Ascending aorta (tissue), 2 donors: ENCODE measurements at regions of chr5 and their contacts with region 1.

Region 1: DNA sequence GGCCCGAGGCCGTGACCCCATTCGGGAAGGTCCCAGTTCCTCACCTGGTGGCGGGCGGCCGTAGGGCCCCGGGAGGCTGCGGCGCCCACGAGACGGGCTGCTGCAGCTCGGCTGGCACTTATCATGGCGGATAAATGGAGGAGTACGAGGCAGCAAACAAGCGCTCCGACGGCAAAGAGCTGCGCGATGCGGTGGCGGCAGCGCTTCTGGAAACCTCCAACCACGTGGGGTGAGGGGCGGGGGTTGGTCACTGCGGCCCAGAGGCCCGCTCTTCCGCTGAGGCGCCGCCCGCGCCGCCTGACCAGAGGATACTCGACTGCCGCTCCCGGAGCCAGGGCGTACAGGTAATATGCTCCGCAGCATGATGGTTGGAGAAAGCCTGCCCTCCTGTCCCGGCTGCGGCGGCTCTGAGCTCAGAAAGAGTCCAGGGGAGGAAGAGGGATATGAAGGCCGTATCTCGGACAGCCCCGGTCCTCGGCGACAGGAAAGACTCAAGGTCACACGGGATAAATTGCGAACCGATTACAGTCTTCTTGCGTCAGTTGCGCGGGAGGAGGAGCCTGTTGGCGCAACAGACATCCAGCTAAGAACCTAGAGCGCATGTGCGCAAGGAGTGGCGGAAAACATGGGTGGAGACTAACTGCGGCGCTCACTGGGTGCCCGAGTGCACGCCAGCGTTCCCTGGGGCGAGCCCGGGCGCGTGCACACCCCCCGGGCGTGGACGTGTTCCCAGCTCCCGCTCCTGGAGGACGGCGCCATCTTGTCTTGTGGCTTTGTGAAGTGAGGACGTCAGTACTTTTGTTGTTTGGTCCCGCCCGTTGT is at the start of gene HSPA9:
- DNase-seq: peak; percentile 96 to 100
- H3K4me3 ChIP-seq: peak within 1 kb of the TSS; percentile 89 to 90
- H3K27ac ChIP-seq: peak within 1 kb of the TSS; percentile 97 to 99
- H3K4me1 ChIP-seq: peaks cover 5 to 15% of the 10 kb centered on the region in 2 donors
- H3K27me3 ChIP-seq: no peaks in the 10 kb centered on the region
- CTCF ChIP-seq: peak in 1 of 3 experiments; percentile 11
- total RNA-seq, gene HSPA9: 75.5 TPM

Region 2: DNA sequence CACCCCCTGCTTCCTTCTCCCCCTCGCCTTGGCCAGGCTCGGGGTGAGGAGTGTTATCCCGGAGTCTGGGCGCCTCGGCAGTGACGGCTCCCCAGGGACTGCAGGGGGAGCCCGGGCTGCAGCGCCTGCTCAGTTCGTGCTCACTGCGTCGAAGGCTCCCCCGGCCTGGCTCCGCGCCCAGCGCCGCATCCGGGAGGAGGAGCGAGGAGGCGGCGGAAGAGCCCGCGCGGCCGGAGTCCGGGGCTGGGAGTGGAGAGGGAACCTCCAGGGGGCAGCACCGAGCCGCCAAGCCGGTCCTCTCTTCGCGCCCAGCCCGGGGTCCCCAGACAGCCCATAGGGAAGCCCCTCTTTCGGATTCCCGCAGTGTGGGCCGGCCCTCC is 111.4 kb before region 1 on chr5:
- intact Hi-C with region 1: loop called (anchors 10 kb)
- DNase-seq: peak; percentile 71 to 96
- H3K4me3 ChIP-seq: peak overlapping the region; percentile 65 to 91
- H3K27ac ChIP-seq: peak overlapping the region; percentile 98 to 99
- H3K4me1 ChIP-seq: peaks cover 9 to 27% of the 10 kb centered on the region in 2 donors
- H3K27me3 ChIP-seq: no peaks in the 10 kb centered on the region
- CTCF ChIP-seq: peak; percentile 90 to 96 (median 95)

Region 3: DNA sequence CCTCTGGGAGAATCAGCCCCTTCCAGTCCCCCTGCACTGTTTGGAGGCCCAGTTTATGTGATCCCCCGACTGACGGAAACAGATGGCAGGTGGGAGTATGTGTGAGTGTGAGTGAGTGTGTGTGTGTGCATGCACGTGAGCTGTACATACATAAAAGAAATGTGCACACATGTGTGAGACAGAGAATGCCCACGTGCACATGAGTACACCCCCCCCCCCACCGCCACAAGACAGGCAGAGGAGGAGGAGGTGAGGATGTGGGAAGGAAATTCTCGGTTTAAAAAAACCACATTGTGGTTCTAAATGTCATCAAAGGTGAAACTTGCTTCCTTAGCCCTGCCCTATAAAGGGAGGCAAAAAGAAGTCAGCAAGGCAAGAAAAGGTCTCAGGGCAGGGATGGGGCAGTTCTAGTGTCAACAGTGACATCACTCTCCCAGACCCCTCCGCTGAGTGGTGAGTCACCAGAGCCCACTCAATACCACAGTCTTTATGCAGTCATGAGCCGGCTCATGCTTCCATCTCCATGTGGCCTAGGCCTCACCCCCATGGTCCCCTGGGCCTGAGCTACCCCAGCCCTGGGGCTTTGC is 79.0 kb after region 1 on chr5:
- intact Hi-C with region 1: no loop called
- DNase-seq: no peak
- H3K4me3 ChIP-seq: no peak overlapping the region
- H3K27ac ChIP-seq: no peak overlapping the region
- H3K4me1 ChIP-seq: no peaks in the 10 kb centered on the region
- H3K27me3 ChIP-seq: no peaks in the 10 kb centered on the region
- CTCF ChIP-seq: no peak

Region 4: GRCh38 chr5:138752951-138753793 is 177.8 kb after region 1 on chr5 and contains the start of gene CTNNA1:
- intact Hi-C with region 1: loop called (anchors 1 kb)
- DNase-seq: peak; percentile 13 to 86
- H3K4me3 ChIP-seq: peak within 1 kb of the TSS; percentile 93 to 98
- H3K27ac ChIP-seq: peak within 1 kb of the TSS; percentile 98 to 100
- H3K4me1 ChIP-seq: peaks cover 6 to 24% of the 10 kb centered on the region in 2 donors
- H3K27me3 ChIP-seq: no peaks in the 10 kb centered on the region
- CTCF ChIP-seq: no peak
- total RNA-seq, gene CTNNA1: 310 TPM

Region 5: DNA sequence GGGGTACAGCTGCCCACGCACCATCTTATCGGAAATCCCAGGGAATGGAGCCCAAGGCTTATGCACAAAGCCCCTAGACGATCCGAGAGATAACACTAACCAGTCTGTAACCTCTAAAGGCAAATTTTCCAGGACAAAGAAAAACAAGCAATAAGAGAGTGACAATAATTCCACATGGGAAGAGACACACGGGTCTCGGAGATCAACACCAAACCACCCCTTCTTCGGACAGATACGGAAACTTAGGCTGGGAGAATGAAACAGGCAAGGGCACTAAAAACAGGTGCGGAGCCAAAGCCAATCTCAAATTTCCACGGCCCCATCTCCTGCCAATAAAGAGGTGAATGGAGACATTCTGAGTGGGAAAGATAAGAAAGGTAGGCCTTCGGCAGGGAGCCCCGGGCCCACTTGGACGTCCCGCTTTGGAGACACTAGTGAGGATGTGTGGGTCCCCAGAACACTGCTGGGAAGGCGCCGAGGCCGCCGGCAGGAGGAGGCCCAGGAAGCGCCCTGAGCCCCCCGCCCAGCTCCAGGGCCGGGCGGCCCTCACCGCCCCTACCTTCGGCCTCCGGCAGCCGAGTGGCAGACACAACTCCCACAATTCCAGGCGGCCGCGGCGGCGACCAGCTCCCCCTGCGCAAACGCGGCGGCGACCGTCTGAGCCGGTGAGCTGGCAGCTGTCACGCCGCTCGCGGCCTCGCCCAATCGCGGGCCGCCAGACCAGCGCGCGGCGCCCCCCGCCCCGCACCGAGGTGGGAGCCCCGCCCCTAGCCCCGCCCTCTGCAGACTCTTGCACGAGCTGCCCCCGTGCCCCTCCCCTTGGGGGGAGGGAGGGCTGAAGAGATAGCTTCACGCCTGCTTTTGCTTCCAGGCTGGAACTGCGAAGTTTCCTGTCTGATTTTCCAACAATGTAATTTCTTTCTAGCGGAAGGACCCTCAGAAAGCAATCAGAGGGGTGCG is 622.6 kb after region 1 on chr5 and contains the start of gene SIL1:
- intact Hi-C with region 1: loop called (anchors 5 kb)
- DNase-seq: peak; percentile 84 to 98
- H3K4me3 ChIP-seq: peak within 1 kb of the TSS; percentile 63 to 79
- H3K27ac ChIP-seq: peak within 1 kb of the TSS; percentile 77 to 89
- H3K4me1 ChIP-seq: peaks cover 0 to 9% of the 10 kb centered on the region in 2 donors
- H3K27me3 ChIP-seq: no peaks in the 10 kb centered on the region
- CTCF ChIP-seq: no peak
- total RNA-seq, gene SIL1: 53.4 TPM

Region 6: DNA sequence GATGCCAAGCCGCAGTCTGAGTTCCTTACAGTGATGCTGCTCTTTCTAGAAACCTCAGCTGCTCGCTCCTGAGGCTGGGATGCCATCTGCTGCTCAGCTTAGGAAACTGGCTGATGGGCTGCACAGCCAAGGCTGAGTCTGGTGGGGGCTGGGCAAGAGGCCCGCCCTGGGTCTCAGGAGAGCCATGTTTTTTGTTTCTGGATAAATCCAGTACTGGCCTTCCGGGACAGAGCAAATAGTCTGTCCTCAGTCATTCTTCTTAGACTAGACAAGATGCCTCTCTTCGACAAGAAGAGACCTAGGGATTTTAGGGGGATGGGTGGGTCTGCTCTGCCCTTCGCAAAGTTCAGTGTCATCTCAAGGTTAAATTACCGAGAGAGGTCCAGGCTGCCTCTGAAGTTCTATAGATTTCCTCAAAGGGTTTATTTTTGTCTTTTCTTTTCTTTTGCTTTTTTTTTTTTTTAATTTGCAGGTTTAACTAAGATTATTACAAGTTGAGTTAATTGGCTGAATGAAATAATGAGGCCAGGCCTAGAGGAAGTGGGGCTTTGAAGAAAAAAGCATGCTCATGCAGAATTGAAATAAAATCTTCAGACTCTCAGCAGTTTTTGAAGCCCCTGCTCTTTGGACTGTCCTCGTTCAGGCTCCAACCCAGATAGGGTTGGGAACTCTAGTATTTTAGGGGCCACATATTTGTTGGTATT is 687.5 kb after region 1 on chr5:
- intact Hi-C with region 1: loop called (anchors 1 kb)
- DNase-seq: peak; percentile 56 to 94
- H3K4me3 ChIP-seq: no peak overlapping the region
- H3K27ac ChIP-seq: peak overlapping the region; percentile 28 to 49
- H3K4me1 ChIP-seq: peaks cover 0 to 8% of the 10 kb centered on the region in 2 donors
- H3K27me3 ChIP-seq: no peaks in the 10 kb centered on the region
- CTCF ChIP-seq: peak; percentile 90 to 96 (median 95)

Region 7: DNA sequence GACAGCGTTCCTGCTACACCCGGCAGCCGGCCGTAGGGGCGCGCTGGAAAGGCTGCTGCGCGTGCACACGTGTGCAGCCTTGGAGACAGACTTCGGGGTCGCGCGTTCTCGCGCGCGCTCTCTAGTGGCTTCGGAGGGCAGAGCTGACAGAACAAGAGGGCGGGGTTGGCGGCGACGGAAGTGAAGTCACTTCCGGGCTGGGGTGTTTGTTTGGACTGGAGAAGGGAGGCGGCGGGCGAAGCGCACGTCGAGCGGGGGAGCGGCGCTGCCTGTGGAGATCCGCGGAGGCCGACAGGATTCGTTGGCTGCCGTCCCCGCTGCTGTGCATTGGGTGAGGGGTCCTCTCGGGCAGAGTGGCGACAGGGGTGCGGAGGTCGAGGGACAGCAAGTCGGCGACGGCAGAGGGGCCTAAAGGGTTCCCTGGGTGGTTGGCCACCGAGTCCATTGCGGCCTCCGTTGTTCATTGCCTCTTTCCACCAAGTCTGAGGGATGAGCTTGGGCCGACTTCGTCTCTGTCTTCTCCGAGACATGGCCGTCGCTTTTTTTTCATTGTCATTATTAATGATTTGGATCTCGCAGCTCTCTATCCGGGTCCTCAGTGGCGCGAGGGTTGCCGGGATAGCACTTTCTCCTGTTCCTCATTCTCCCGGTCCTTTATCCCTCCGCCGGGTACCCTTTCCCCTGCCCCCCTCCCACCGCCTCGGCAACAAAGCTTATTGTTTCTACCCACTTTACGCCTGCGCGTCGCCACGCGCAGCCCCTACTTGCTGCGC is 766.4 kb after region 1 on chr5 and contains the start of gene PAIP2:
- intact Hi-C with region 1: loop called (anchors 2 kb)
- DNase-seq: peak; percentile 88 to 99
- H3K4me3 ChIP-seq: peak within 1 kb of the TSS; percentile 71 to 97
- H3K27ac ChIP-seq: peak within 1 kb of the TSS; percentile 90 to 99
- H3K4me1 ChIP-seq: peaks cover 5 to 19% of the 10 kb centered on the region in 2 donors
- H3K27me3 ChIP-seq: no peaks in the 10 kb centered on the region
- CTCF ChIP-seq: peak; percentile 78 to 85 (median 84)
- total RNA-seq, gene PAIP2: 27.6 TPM